Gastrocnemius medialis (tissue), 4 donors: ENCODE measurements at regions of chr6 and their contacts with region 1.

Region 1: GRCh38 chr6:44475779-44476434 is 88.4 kb downstream of the CDC5L start:
- DNase-seq: peak; percentile 58 to 68
- ATAC-seq: peak; percentile 75 to 82
- H3K4me3 ChIP-seq: peak overlapping the region in 1 of 4 donors; percentile 17
- H3K27ac ChIP-seq: no peak overlapping the region
- H3K4me1 ChIP-seq: peaks cover 21 to 47% of the 10 kb centered on the region in 2 donors
- H3K27me3 ChIP-seq: no peaks in the 10 kb centered on the region
- CTCF ChIP-seq: peak; percentile 88 to 95 (median 92)
- POLR2A ChIP-seq: no peak

Region 2: GRCh38 chr6:44489910-44490604 is 14.2 kb after region 1 on chr6:
- in situ Hi-C with region 1: no loop called
- intact Hi-C with region 1: loop called (anchors 2 kb)
- DNase-seq: peak; percentile 36 to 38
- ATAC-seq: peak; percentile 98 to 99
- H3K4me3 ChIP-seq: no peak overlapping the region
- H3K27ac ChIP-seq: peak overlapping the region; percentile 52 to 63 (median 58)
- H3K4me1 ChIP-seq: peaks cover 0 to 5% of the 10 kb centered on the region in 2 donors
- H3K27me3 ChIP-seq: no peaks in the 10 kb centered on the region
- CTCF ChIP-seq: no peak
- POLR2A ChIP-seq: no peak

Region 3: DNA sequence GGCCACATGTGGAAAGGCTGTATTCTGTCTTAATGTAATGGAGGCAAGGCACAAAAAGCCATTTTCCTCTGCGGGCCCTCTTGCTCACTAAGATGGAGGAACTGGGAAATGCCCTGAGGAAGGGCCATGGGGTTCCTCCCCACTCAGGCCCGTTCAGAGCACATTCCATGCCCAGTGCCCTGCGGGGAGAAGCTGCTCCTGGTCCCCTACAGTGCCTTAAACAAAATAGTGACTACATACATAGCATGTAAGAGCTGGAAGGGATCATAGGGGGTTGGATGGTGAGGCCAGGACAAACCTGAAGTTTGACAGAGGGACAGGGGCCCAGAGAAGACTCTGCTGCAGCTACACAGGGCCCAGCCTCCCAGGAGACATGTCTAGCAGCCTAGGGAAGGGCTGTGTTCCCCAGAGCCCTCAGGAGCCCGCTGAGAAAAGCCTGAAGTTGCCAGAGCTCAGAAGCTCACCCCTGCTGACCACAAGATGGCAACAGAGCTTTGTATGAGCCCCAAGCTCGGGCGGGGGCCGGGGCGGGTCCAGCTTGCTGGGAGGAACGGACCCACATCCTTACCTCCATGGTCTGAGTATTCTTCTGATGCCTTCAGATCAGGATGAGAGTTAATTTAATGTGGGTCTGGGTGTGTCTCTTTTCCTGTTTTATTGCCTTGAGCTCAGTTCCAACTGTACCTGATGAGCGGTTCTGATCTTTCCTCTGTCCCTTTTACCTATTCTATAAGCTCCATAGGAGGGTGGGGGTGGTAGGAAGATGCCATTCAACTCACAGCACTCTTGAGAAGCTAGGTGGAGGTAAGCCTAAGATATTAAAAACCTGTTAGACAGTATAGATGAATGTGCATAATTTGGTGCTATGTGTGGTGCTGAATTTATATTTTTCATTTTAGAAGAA is 154.5 kb after region 1 on chr6:
- in situ Hi-C with region 1: loop called in 1 of 4 experiments (anchors 25 kb)
- intact Hi-C with region 1: no loop called
- DNase-seq: peak in 1 of 2 donors; percentile 19
- ATAC-seq: no peak
- H3K4me3 ChIP-seq: no peak overlapping the region
- H3K27ac ChIP-seq: no peak overlapping the region
- H3K4me1 ChIP-seq: no peaks in the 10 kb centered on the region
- H3K27me3 ChIP-seq: peaks cover 4 to 7% (median 5%) of the 10 kb centered on the region in 3 donors
- CTCF ChIP-seq: peak in 3 of 5 experiments; percentile 23 to 42 (median 31)
- POLR2A ChIP-seq: no peak

Region 4: GRCh38 chr6:44649365-44650025 is 173.6 kb after region 1 on chr6:
- in situ Hi-C with region 1: loop called in 2 of 4 experiments (anchors 10 to 25 kb)
- intact Hi-C with region 1: loop called (anchors 5 kb)
- DNase-seq: no peak
- ATAC-seq: peak; percentile 55 to 67
- H3K4me3 ChIP-seq: no peak overlapping the region
- H3K27ac ChIP-seq: peak overlapping the region in 1 of 4 donors; percentile 22
- H3K4me1 ChIP-seq: peaks cover 5 to 6% of the 10 kb centered on the region in 2 donors
- H3K27me3 ChIP-seq: no peaks in the 10 kb centered on the region
- CTCF ChIP-seq: no peak
- POLR2A ChIP-seq: no peak

Region 5: DNA sequence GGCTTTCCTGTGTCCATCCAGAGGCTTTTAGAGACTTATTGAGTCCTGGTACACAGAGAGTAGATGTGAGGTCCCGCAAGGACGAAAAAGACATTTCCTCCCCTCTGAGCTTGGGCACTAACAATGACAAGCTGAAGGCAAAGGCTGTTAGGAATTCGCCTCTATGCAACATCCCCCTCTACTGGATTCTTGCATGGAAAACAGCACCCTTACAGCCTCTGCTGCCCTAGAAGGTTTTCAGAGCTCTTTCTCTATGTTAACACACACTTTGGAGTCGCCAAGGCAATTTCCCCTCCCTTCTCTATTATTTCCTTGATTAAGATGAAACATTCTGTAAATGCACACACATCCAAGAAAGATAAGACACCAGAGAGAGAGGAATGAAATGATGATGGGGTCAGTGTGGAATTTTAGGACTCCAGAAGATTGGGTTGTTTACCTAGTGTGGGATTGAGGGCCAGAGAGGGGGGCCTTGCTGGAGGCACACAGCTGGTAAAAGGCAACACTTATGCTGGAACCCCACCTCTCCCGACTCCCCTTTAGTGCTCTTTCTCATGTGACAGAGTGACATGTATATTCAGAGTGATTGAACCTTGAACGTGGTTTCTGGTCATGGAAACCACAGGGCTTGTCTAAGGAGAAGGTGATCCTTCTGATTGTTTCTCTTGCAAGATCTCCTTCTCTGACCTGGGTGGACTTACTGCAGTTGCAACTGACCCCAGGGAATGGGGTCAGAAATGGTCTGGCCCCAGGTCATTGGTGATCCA is 1239.0 kb after region 1 on chr6:
- in situ Hi-C with region 1: loop called in 2 of 4 experiments (anchors 10 to 25 kb)
- intact Hi-C with region 1: loop called (anchors 5 kb)
- DNase-seq: peak; percentile 16 to 43
- ATAC-seq: peak; percentile 95 to 96
- H3K4me3 ChIP-seq: no peak overlapping the region
- H3K27ac ChIP-seq: no peak overlapping the region
- H3K4me1 ChIP-seq: peaks cover 0 to 7% of the 10 kb centered on the region in 2 donors
- H3K27me3 ChIP-seq: no peaks in the 10 kb centered on the region
- CTCF ChIP-seq: peak; percentile 60 to 84 (median 70)
- POLR2A ChIP-seq: no peak

Region 6: DNA sequence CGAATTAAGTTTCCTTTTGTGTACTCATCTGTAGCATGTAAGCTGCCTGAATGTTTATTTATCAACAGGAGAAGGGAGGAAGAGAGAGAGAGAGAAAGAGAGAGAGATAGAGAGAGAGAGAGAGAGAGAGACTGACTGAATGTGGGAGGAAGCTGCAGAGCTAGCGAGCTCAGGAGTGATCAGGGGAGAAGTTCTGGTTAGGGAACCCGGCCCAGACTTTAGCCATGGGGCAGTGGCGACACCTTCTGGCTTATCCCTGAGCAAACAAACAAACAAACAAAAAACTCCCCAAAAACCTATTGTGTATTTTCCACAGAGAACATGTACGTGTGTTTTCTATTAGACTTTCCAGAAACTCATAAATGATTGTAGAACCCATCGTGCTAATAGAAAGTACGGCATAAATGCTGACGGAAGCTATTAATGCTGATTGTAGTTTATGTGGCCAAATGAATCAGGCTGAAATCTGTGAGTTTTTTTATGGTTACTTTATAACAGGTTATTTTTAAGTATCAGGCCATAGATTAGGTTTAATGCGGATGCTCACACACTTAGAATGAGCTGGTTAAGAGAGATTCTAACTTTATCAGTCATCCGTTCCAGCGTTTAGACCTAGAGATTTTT is 1446.9 kb after region 1 on chr6:
- in situ Hi-C with region 1: loop called in 3 of 4 experiments (anchors 25 kb)
- intact Hi-C with region 1: loop called (anchors 5 kb)
- DNase-seq: peak; percentile 52 to 58
- ATAC-seq: peak; percentile 62 to 74
- H3K4me3 ChIP-seq: no peak overlapping the region
- H3K27ac ChIP-seq: peak overlapping the region in 2 of 4 donors; percentile 7 to 29
- H3K4me1 ChIP-seq: peaks cover 12 to 24% of the 10 kb centered on the region in 2 donors
- H3K27me3 ChIP-seq: no peaks in the 10 kb centered on the region
- CTCF ChIP-seq: peak; percentile 49 to 66 (median 57)
- POLR2A ChIP-seq: no peak